ENCODE measurements at regions of chr20 and their contacts with region 1.

Region 1: GRCh38 chr20:62616728-62617621 is 25.3 kb upstream of the SLCO4A1 start:
- DNase-seq: peak; percentile 92 to 96
- H3K4me3 ChIP-seq: no peak overlapping the region
- H3K4me3 Mint-ChIP-seq: no peak overlapping the region
- H3K27ac Mint-ChIP-seq: peak overlapping the region; percentile 32
- H3K4me1 ChIP-seq: peaks cover 16% of the 10 kb centered on the region
- H3K4me1 Mint-ChIP-seq: peaks cover 8% of the 10 kb centered on the region
- H3K27me3 ChIP-seq: no peaks in the 10 kb centered on the region
- H3K27me3 Mint-ChIP-seq: no peaks in the 10 kb centered on the region
- CTCF ChIP-seq: peak; percentile 100

Region 2: DNA sequence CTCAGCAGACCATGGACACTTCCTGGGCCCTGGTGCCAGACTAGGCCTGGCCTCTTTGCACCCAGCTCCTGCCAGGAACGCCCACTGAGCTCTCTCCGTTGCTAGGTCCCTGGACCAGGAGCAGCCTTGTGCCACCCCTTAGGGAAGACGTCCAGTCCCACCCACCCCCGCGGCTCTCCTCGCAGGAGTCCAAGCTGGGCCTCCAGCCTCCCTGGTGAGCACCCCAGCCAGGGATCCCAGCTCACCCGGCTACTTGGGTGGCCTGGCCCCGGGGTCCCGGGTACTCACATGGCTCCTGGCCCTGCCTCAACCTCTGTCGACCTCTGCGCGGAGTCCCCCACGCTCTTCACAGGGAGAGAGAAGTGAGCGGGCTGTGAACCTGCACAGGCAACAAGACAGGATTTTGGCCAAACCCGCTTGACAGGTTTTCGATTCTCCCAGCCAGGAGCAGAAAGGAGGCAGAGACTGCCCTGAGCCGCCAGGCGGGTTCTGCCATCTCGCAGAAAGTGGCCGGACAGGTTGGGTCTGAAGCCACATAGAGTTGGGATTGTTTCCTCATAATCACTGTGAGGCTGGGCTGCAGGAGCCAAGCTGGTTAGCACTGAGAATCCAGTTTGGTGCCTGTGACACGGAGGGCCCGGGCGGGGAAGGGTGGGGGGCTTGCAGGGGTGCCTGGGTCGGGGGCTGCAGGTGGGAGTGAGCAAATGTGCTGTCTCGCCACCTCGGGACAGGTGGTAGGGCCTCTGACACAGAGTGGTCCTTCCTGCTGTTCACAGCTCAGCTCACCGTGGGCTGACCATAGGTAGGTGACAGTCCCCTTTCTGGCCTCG is 189.6 kb before region 1 on chr20 and contains the start of gene RBBP8NL:
- CTCF ChIA-PET with region 1: interaction called, 18 read pairs
- POLR2A ChIA-PET with region 1: no interaction called
- intact Hi-C with region 1: loop called (anchors 2 kb)
- DNase-seq: peak; percentile 100
- H3K4me3 ChIP-seq: peak within 1 kb of the TSS; percentile 41
- H3K4me3 Mint-ChIP-seq: peak within 1 kb of the TSS; percentile 90
- H3K27ac Mint-ChIP-seq: peak within 1 kb of the TSS; percentile 88
- H3K4me1 ChIP-seq: peaks cover 92% of the 10 kb centered on the region
- H3K4me1 Mint-ChIP-seq: peaks cover 84% of the 10 kb centered on the region
- H3K27me3 ChIP-seq: no peaks in the 10 kb centered on the region
- H3K27me3 Mint-ChIP-seq: no peaks in the 10 kb centered on the region
- CTCF ChIP-seq: peak; percentile 42 to 79
- total RNA-seq, gene RBBP8NL: 39.2 and 40.5 TPM in 2 replicates

Region 3: DNA sequence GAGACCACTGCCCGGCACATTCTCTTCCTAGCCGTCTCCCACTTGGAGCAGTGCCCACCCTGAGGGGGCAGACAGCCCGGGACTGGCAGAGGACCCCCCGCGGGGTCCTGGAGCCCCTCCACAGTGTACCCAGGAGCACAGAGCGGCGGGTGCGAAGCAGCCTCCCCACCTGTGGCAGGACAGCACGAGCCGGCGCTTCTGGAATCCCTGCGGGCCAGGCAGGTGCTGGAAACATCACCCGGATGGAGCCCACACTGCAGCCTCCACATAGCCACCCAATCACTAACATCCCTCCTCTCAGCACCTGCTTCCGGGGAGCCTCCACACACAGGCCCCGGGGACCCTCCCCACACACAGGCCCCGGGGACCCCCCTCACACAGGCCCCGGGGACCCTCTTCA is 159.9 kb before region 1 on chr20:
- CTCF ChIA-PET with region 1: no interaction called
- POLR2A ChIA-PET with region 1: no interaction called
- intact Hi-C with region 1: no loop called
- DNase-seq: no peak
- H3K4me3 ChIP-seq: no peak overlapping the region
- H3K4me3 Mint-ChIP-seq: no peak overlapping the region
- H3K27ac Mint-ChIP-seq: peak overlapping the region; percentile 86
- H3K4me1 ChIP-seq: peaks cover 39% of the 10 kb centered on the region
- H3K4me1 Mint-ChIP-seq: peaks cover 13% of the 10 kb centered on the region
- H3K27me3 ChIP-seq: no peaks in the 10 kb centered on the region
- H3K27me3 Mint-ChIP-seq: no peaks in the 10 kb centered on the region
- CTCF ChIP-seq: no peak

Region 4: DNA sequence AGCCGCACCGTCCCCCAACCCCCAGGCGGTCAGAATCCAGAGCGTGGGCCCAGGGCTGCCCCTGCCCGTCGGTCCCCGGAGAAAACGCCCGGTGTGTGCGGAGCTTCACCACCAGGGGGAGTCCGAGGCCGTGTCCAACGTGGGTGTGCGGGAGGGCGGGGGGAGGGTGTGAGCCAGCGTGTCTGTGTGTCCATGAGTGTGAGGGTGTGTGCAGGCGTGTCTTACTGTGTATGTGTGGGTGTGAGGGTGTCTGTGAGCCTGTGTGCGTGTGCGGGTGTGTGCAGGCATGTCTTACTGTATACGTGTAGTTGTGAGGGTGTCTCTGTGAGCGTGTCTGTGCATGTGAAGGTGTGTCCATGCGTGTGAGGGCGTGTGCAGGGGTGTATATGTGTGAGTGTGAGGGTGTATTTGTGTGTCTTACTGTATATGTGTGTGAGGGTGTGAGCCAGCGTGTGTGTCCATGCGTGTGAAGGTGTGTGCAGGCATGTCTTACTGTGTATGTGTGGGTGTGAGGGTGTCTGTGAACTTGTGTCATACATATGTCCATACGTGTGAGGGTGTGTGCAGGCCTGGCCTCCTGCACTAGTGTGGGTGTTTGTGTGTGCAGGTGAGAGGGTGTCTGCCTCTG is 116.6 kb before region 1 on chr20:
- CTCF ChIA-PET with region 1: interaction called, 22 read pairs
- POLR2A ChIA-PET with region 1: no interaction called
- intact Hi-C with region 1: loop called (anchors 5 kb)
- DNase-seq: peak in 1 of 2 experiments; percentile 81
- H3K4me3 ChIP-seq: no peak overlapping the region
- H3K4me3 Mint-ChIP-seq: no peak overlapping the region
- H3K27ac Mint-ChIP-seq: no peak overlapping the region
- H3K4me1 ChIP-seq: peaks cover 17% of the 10 kb centered on the region
- H3K4me1 Mint-ChIP-seq: no peaks in the 10 kb centered on the region
- H3K27me3 ChIP-seq: no peaks in the 10 kb centered on the region
- H3K27me3 Mint-ChIP-seq: no peaks in the 10 kb centered on the region
- CTCF ChIP-seq: peak; percentile 81 to 89

Region 5: GRCh38 chr20:62576815-62577506 is 40.0 kb before region 1 on chr20:
- CTCF ChIA-PET with region 1: interaction called, 11 read pairs
- POLR2A ChIA-PET with region 1: no interaction called
- intact Hi-C with region 1: no loop called
- DNase-seq: peak in 1 of 2 experiments; percentile 67
- H3K4me3 ChIP-seq: no peak overlapping the region
- H3K4me3 Mint-ChIP-seq: no peak overlapping the region
- H3K27ac Mint-ChIP-seq: no peak overlapping the region
- H3K4me1 ChIP-seq: no peaks in the 10 kb centered on the region; the same call in 1 of the 2 replicates
- H3K4me1 Mint-ChIP-seq: no peaks in the 10 kb centered on the region
- H3K27me3 ChIP-seq: no peaks in the 10 kb centered on the region
- H3K27me3 Mint-ChIP-seq: peaks cover 33% of the 10 kb centered on the region
- CTCF ChIP-seq: no peak

Region 6: DNA sequence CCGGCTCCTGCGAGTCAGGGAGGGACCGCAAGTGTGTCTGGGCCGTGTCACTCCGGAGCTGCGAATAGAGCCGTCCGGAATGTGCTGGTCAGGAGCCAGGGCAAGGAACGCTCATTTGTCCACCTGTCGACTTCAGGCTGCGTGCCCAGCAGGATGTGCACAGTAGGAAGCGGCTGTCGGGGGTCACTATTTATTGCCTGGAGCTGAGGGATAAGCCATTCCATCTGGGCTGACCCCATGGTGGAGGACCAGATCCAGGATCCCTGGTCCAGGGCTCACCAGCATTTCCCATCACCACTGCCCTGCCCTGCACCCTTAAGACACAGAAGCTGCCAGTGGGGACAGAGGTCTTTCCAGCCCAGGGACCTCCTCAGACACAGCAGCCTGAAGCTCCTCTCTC is 106.4 kb after region 1 on chr20:
- CTCF ChIA-PET with region 1: no interaction called
- POLR2A ChIA-PET with region 1: no interaction called
- intact Hi-C with region 1: no loop called
- DNase-seq: no peak
- H3K4me3 ChIP-seq: no peak overlapping the region
- H3K4me3 Mint-ChIP-seq: no peak overlapping the region
- H3K27ac Mint-ChIP-seq: no peak overlapping the region
- H3K4me1 ChIP-seq: no peaks in the 10 kb centered on the region
- H3K4me1 Mint-ChIP-seq: no peaks in the 10 kb centered on the region
- H3K27me3 ChIP-seq: peaks cover 13% of the 10 kb centered on the region
- H3K27me3 Mint-ChIP-seq: peaks cover 66% of the 10 kb centered on the region
- CTCF ChIP-seq: no peak

Region 7: DNA sequence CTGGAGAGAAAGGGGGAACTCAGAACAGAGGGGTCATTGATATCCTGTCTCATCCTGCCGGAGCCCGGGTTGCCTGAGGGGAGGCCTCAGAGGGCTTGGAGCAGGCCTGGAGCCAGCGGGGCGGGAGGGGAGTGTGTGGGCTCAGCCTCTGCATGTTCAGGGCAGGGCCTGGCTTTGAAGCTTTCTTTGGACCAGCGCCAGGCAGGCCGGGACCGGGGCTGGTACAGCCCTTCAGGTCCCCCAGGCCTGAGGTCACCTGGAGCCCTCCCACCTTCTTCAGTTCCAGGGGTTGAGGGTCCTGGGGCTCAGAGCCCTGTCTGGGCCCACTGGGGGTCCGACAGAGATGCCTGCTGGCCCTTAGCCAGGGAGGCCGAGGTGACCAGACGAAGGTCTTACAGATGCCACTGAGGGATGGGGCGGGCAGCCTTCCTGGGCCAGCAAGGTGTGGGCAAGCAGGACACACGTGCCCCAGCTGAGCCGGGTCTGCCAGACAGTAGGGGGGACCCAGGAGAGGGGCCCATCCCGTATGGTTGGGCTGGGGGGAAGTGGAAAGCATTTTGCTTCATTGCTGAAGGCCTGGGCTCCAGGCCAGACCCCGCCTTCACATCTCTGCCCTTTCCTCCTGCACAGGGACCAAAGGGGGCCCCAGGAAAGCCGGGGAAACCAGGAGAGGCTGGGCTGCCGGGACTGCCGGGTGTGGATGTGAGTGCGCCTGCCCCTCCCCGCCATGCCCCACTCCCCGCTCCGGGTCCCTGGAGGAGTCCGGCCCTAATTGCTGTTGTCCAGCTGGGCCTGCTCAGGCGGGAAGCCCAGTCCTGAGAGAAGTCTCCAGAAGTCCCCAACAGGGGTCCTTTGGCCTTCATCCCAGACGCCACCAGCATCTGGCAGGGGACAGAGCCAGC is 201.9 kb after region 1 on chr20:
- CTCF ChIA-PET with region 1: no interaction called
- POLR2A ChIA-PET with region 1: no interaction called
- intact Hi-C with region 1: no loop called
- DNase-seq: no peak
- H3K4me3 ChIP-seq: no peak overlapping the region
- H3K4me3 Mint-ChIP-seq: peak overlapping the region; percentile 42
- H3K27ac Mint-ChIP-seq: no peak overlapping the region
- H3K4me1 ChIP-seq: peaks cover 23% of the 10 kb centered on the region
- H3K4me1 Mint-ChIP-seq: peaks cover 11% of the 10 kb centered on the region
- H3K27me3 ChIP-seq: no peaks in the 10 kb centered on the region
- H3K27me3 Mint-ChIP-seq: no peaks in the 10 kb centered on the region
- CTCF ChIP-seq: no peak

Region 8: GRCh38 chr20:62937366-62938104 is 320.6 kb after region 1 on chr20:
- CTCF ChIA-PET with region 1: no interaction called
- POLR2A ChIA-PET with region 1: no interaction called
- intact Hi-C with region 1: no loop called
- DNase-seq: peak; percentile 99 to 100
- H3K4me3 ChIP-seq: peak overlapping the region; percentile 81
- H3K4me3 Mint-ChIP-seq: no peak overlapping the region
- H3K27ac Mint-ChIP-seq: peak overlapping the region; percentile 95
- H3K4me1 ChIP-seq: peaks cover 26% of the 10 kb centered on the region
- H3K4me1 Mint-ChIP-seq: peaks cover 8% of the 10 kb centered on the region
- H3K27me3 ChIP-seq: no peaks in the 10 kb centered on the region
- H3K27me3 Mint-ChIP-seq: no peaks in the 10 kb centered on the region
- CTCF ChIP-seq: no peak